Activated T-helper 1 cell treated with anti-CD3 and anti-CD28 coated beads, Interleukin-12 subunit alpha, Interleukin-12 subunit beta, Interleukin-2, Interleukin-4 antibody, amounts not matched to agents 30 ng/mL and 10 ng/mL and 1 ng/mL, durations not matched to agents 14 hours and 24 hours and 36 hours (primary cell): ENCODE measurements at regions of chr3 and their contacts with region 1.

Region 1: DNA sequence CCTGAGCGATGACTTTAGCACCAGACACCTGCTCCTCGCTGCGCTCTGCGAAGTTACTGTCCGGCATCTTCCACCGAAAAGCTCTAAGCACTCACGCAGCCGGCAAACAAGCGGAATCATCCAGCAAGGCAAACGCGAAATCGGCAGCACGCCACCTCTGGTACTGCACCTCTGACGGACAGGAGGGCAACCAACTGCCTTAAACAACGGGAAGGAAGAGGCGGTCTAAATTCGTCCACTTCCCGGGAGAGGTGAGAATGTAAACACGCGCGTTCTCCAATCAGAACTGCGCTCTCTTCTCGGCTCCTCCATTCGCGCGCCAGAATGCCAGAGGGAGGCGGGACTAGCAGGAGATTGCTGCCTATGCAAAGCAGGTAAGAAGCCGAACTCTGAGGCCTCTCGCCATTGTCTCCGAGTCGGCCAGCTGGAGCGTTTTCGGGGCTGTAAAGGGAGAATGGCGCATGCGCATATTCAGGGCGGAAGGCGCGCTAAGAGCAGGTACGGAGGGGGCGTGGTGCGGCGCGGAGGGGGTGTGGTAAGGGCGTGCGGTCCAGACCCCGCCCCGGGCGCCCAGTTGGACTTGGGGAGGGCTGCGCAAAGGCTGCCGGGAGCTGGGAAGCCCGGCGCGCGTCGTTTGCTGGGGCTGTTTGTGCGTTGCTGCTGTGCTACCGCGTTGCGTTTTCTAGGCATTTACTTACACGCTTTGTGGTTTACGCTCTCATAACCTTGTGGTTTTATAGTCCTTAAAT is at the starts of genes BTD and HACL1:
- DNase-seq: peak; percentile 97
- H3K4me3 Mint-ChIP-seq: peak within 1 kb of the TSS; percentile 99
- H3K27ac Mint-ChIP-seq: peak within 1 kb of the TSS; percentile 99
- H3K4me1 Mint-ChIP-seq: peaks cover 51% of the 10 kb centered on the region
- H3K27me3 Mint-ChIP-seq: no peaks in the 10 kb centered on the region
- total RNA-seq, gene BTD: 2.6 and 3.5 TPM in 2 replicates
- total RNA-seq, gene HACL1: 21.4 and 24.8 TPM in 2 replicates

Region 2: GRCh38 chr3:14178247-14179113 is 1423.1 kb before region 1 on chr3 and contains the starts of genes LSM3 and XPC:
- intact Hi-C with region 1: loop called (anchors 5 kb)
- DNase-seq: peak; percentile 98
- H3K4me3 Mint-ChIP-seq: peak within 1 kb of the TSS; percentile 94
- H3K27ac Mint-ChIP-seq: peak within 1 kb of the TSS; percentile 99
- H3K4me1 Mint-ChIP-seq: peaks cover 64% of the 10 kb centered on the region
- H3K27me3 Mint-ChIP-seq: no peaks in the 10 kb centered on the region
- total RNA-seq, gene LSM3: 15.6 and 15.8 TPM in 2 replicates
- total RNA-seq, gene XPC: 34.1 and 35.9 TPM in 2 replicates

Region 3: GRCh38 chr3:15098503-15099363 is 502.8 kb before region 1 on chr3 and contains the start of gene RBSN:
- intact Hi-C with region 1: loop called (anchors 1 kb)
- DNase-seq: peak; percentile 95
- H3K4me3 Mint-ChIP-seq: peak within 1 kb of the TSS; percentile 92
- H3K27ac Mint-ChIP-seq: peak within 1 kb of the TSS; percentile 98
- H3K4me1 Mint-ChIP-seq: peaks cover 22% of the 10 kb centered on the region
- H3K27me3 Mint-ChIP-seq: peaks cover 2% of the 10 kb centered on the region
- total RNA-seq, gene RBSN: 11.7 and 12.5 TPM in 2 replicates

Region 4: DNA sequence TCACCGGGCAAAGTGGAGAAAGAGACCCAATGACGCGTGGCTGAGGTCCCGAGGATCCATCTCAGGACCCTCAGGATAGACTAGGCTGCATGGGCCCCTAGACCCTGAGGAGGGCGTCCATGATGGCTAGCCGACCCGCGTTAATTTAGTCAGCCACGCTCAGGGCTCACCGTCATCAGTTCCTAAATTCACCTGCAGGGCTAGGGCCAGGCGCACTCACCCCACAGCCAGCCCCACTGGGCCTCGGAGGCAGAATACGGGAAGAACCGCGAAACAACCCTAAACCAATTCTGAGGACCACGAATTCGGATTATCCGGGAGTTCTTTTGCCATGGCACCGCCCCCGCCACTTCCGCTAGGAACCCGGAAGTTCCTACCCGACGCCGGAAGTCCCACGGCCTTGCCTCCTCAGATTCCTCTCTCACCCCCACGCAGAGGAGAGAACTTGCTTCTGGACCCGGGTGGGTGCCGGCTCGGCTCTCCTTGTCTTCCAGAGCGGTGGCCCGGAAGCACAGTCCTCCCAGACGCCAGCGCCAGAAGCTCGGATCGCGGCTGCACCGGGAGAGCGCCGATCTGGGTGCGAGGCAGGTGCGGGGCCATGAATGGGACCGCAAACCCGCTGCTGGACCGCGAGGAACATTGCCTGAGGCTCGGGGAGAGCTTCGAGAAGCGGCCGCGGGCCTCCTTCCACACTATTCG is 174.2 kb before region 1 on chr3 and contains the starts of genes EAF1 and METTL6:
- intact Hi-C with region 1: loop called (anchors 1 kb)
- DNase-seq: peak; percentile 81
- H3K4me3 Mint-ChIP-seq: peak within 1 kb of the TSS; percentile 97
- H3K27ac Mint-ChIP-seq: peak within 1 kb of the TSS; percentile 96
- H3K4me1 Mint-ChIP-seq: peaks cover 61% of the 10 kb centered on the region
- H3K27me3 Mint-ChIP-seq: no peaks in the 10 kb centered on the region
- total RNA-seq, gene EAF1: 27.3 and 27.8 TPM in 2 replicates
- total RNA-seq, gene METTL6: 15.0 and 15.8 TPM in 2 replicates

Region 5: DNA sequence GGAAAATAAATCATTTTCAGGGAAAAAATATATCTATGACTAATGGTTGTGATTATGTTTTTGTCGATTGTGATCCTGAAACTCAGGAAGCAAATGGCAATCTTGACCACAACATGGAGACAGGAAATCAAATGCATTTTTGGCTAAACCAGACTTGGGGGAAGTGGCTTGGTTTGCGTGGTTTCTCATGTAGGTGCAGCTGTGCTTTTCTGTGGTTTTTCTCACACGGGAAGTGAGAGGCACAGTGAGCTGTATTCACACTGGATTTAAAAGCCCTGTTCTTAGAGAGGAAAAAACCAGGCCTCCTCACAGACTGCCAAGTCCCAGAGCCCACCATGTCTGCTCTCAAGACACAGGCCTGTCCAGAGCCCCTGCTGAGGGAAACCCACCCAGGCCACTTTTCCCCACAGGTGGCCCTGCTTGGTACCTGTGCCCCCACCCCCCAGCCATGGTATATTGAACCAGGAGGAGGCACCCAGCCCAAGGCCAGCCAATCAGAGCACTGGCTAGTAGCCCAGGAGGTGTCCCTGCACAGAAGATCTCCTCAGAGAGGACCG is 46.1 kb after region 1 on chr3:
- intact Hi-C with region 1: loop called (anchors 1 kb)
- DNase-seq: peak; percentile 63
- H3K4me3 Mint-ChIP-seq: peak overlapping the region; percentile 60
- H3K27ac Mint-ChIP-seq: peak overlapping the region; percentile 57
- H3K4me1 Mint-ChIP-seq: peaks cover 52% of the 10 kb centered on the region
- H3K27me3 Mint-ChIP-seq: peaks cover 7% of the 10 kb centered on the region

Region 6: DNA sequence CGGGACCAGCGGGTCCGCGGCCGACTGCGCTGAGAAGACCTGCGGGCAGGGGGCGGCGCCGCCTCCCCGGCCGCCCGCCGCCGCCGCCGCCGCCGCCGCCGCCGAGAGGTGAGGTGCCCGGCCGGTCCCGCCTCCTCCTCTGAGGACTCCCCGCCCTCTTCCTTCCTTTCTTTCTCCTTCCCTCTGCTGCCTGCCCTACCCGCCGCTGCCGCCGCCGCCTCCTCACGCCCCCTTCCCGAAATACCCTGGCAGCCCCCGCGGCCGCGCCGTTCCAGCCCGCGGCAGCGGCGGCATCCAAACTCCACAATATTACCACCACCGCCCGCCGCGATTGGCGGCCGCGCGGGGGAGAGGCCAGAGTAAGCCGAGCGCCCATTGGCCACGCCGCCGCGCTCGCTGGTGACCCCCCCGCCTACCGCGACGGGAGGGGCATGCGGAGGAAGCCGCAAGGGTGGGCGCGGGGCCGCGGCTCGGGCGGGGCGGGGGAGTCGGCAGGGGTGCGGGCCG is 258.0 kb after region 1 on chr3:
- intact Hi-C with region 1: loop called (anchors 1 kb)
- DNase-seq: peak; percentile 78
- H3K4me3 Mint-ChIP-seq: peak overlapping the region; percentile 92
- H3K27ac Mint-ChIP-seq: peak overlapping the region; percentile 91
- H3K4me1 Mint-ChIP-seq: peaks cover 33% of the 10 kb centered on the region
- H3K27me3 Mint-ChIP-seq: peaks cover 3% of the 10 kb centered on the region